Caco-2 (cell line): ENCODE measurements at regions of chr5 and their contacts with region 1.

Region 1: GRCh38 chr5:55159763-55160492 is at the start of gene GPX8:
- DNase-seq: peak; percentile 53 to 60
- H3K4me3 ChIP-seq: peak within 1 kb of the TSS; percentile 32
- H3K4me3 Mint-ChIP-seq: peak within 1 kb of the TSS; percentile 78
- H3K27ac Mint-ChIP-seq: peak within 1 kb of the TSS; percentile 78
- H3K4me1 ChIP-seq: no peaks in the 10 kb centered on the region
- H3K4me1 Mint-ChIP-seq: no peaks in the 10 kb centered on the region
- H3K27me3 ChIP-seq: no peaks in the 10 kb centered on the region
- H3K27me3 Mint-ChIP-seq: peaks cover 18% of the 10 kb centered on the region
- CTCF ChIP-seq: peak; percentile 57 to 58
- total RNA-seq, gene GPX8: 18.8 and 18.9 TPM in 2 replicates

Region 2: DNA sequence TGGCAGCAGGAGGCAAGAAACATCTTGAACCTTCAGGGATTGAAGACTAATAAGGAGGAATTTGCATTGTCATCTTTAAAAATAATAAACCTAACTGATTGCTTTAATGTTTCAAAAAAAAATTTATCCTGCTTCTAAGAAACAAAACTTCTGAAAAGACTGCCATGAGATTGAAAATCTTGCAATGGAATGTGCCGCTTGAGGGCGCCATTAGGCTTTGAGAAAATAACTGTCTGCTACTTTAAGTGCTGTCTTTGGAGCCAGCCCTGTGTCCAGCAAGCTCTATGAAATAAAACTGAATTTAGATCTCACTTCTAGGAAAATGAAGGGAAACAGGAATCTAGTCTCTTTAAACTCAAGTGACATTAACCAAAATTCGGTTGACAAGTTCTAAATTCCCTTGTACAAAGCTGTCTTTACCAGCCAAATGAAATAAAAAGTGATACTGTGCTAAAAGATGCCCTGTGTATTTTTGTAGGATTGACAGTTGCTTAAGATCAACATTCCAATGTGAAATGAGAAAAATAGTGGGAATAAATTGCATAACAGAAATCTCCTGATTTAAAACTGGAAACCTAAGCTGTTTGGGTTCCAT is 253.9 kb before region 1 on chr5:
- CTCF ChIA-PET with region 1: interaction called, 10 read pairs
- POLR2A ChIA-PET with region 1: no interaction called
- intact Hi-C with region 1: no loop called
- DNase-seq: peak; percentile 45 to 67
- H3K4me3 ChIP-seq: no peak overlapping the region
- H3K4me3 Mint-ChIP-seq: no peak overlapping the region
- H3K27ac Mint-ChIP-seq: no peak overlapping the region
- H3K4me1 ChIP-seq: no peaks in the 10 kb centered on the region
- H3K4me1 Mint-ChIP-seq: no peaks in the 10 kb centered on the region
- H3K27me3 ChIP-seq: no peaks in the 10 kb centered on the region
- H3K27me3 Mint-ChIP-seq: peaks cover 18% of the 10 kb centered on the region
- CTCF ChIP-seq: peak; percentile 66 to 71

Region 3: GRCh38 chr5:54944364-54944763 is 215.6 kb before region 1 on chr5:
- CTCF ChIA-PET with region 1: interaction called, 42 read pairs
- POLR2A ChIA-PET with region 1: no interaction called
- intact Hi-C with region 1: no loop called
- DNase-seq: peak in 1 of 2 experiments; percentile 10
- H3K4me3 ChIP-seq: no peak overlapping the region
- H3K4me3 Mint-ChIP-seq: no peak overlapping the region
- H3K27ac Mint-ChIP-seq: no peak overlapping the region
- H3K4me1 ChIP-seq: no peaks in the 10 kb centered on the region
- H3K4me1 Mint-ChIP-seq: no peaks in the 10 kb centered on the region
- H3K27me3 ChIP-seq: no peaks in the 10 kb centered on the region
- H3K27me3 Mint-ChIP-seq: peaks cover 20% of the 10 kb centered on the region
- CTCF ChIP-seq: peak; percentile 60 to 76

Region 4: GRCh38 chr5:55146543-55147151 is 13.3 kb before region 1 on chr5:
- CTCF ChIA-PET with region 1: interaction called, 16 read pairs
- POLR2A ChIA-PET with region 1: no interaction called
- intact Hi-C with region 1: loop called (anchors 1 kb)
- DNase-seq: peak; percentile 85 to 90
- H3K4me3 ChIP-seq: no peak overlapping the region
- H3K4me3 Mint-ChIP-seq: no peak overlapping the region
- H3K27ac Mint-ChIP-seq: no peak overlapping the region
- H3K4me1 ChIP-seq: no peaks in the 10 kb centered on the region
- H3K4me1 Mint-ChIP-seq: no peaks in the 10 kb centered on the region
- H3K27me3 ChIP-seq: no peaks in the 10 kb centered on the region
- H3K27me3 Mint-ChIP-seq: peaks cover 18% of the 10 kb centered on the region
- CTCF ChIP-seq: peak; percentile 95 to 96

Region 5: DNA sequence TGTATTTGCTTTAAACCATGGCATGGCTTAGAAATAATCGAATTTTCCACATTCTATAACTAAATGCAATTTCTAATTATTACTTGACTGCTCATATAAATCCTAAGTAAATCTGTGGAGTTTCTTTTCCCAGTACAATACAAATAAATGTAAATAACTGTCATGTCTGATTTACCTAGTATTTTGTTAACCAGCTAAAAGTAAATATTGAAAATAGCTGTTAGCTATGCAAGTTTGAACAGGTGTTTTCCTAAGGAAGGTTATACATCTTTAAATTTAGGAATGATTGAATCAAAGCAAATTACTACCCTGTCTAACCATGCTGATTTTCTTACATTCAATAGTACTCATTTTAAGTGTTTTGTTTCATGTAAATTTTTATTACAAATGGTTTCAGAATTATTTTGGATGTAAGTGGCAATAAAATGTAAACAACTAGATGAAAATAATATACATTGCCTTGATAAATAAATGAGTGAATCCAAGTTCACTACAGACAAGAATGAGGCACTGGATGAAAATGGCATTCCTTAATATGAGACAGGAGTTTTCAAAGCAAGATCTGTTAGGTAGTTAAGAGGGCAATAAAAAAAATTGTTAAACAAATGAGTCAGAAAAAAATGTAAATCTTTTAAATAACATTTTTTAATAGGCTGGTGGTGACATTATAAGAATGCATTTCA is 51.4 kb after region 1 on chr5:
- CTCF ChIA-PET with region 1: no interaction called
- POLR2A ChIA-PET with region 1: no interaction called
- intact Hi-C with region 1: no loop called
- DNase-seq: no peak
- H3K4me3 ChIP-seq: no peak overlapping the region
- H3K4me3 Mint-ChIP-seq: no peak overlapping the region
- H3K27ac Mint-ChIP-seq: no peak overlapping the region
- H3K4me1 ChIP-seq: no peaks in the 10 kb centered on the region
- H3K4me1 Mint-ChIP-seq: no peaks in the 10 kb centered on the region
- H3K27me3 ChIP-seq: no peaks in the 10 kb centered on the region
- H3K27me3 Mint-ChIP-seq: peaks cover 8% of the 10 kb centered on the region
- CTCF ChIP-seq: no peak

Region 6: GRCh38 chr5:55241746-55242145 is 81.8 kb after region 1 on chr5:
- CTCF ChIA-PET with region 1: no interaction called
- POLR2A ChIA-PET with region 1: no interaction called
- intact Hi-C with region 1: no loop called
- DNase-seq: no peak
- H3K4me3 ChIP-seq: no peak overlapping the region
- H3K4me3 Mint-ChIP-seq: no peak overlapping the region
- H3K27ac Mint-ChIP-seq: no peak overlapping the region
- H3K4me1 ChIP-seq: no peaks in the 10 kb centered on the region
- H3K4me1 Mint-ChIP-seq: no peaks in the 10 kb centered on the region
- H3K27me3 ChIP-seq: no peaks in the 10 kb centered on the region
- H3K27me3 Mint-ChIP-seq: peaks cover 6% of the 10 kb centered on the region
- CTCF ChIP-seq: no peak

Region 7: DNA sequence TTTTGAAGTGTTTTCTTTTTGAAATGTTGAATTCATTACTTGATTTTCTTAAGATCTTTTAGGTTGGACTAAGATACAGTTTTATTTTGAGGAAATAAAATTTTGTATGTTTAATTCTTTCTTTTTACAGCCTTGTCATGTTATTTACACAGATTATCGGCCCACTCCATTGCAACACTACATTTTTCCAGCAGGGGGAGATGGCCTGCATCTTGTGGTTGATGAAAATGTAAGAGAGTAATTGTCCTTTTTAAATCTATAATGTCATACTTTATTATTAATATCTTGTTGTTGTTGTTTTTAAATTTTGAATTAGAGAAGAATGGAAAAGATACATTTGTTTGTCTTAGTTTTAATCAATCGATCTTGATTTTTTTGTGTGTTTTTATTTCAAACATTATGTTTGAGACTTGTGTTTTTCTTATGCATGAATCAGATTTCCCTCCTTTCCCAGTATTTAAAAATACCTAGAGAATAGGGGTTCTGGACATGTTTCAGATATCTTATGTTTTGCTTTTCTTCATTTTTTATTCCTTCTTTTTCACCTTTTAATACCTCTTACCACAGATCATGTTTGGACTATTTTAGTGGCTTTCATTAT is 184.6 kb after region 1 on chr5:
- CTCF ChIA-PET with region 1: no interaction called
- POLR2A ChIA-PET with region 1: no interaction called
- intact Hi-C with region 1: no loop called
- DNase-seq: peak; percentile 59 to 76
- H3K4me3 ChIP-seq: no peak overlapping the region
- H3K4me3 Mint-ChIP-seq: no peak overlapping the region
- H3K27ac Mint-ChIP-seq: no peak overlapping the region
- H3K4me1 ChIP-seq: no peaks in the 10 kb centered on the region
- H3K4me1 Mint-ChIP-seq: no peaks in the 10 kb centered on the region
- H3K27me3 ChIP-seq: no peaks in the 10 kb centered on the region
- H3K27me3 Mint-ChIP-seq: no peaks in the 10 kb centered on the region
- CTCF ChIP-seq: peak; percentile 82 to 86